Dorsolateral prefrontal cortex (tissue), 120 donors: ENCODE measurements at regions of chr4 and their contacts with region 1.

Region 1: GRCh38 chr4:7802093-7802726 is 137.5 kb downstream of the AFAP1 start:
- DNase-seq: peak; percentile 77 to 94 (median 84)
- H3K4me3 ChIP-seq: no peak overlapping the region
- H3K27ac ChIP-seq: peak overlapping the region in 1 of 59 donors; percentile 3
- H3K27me3 ChIP-seq: no peaks in the 10 kb centered on the region
- CTCF ChIP-seq: peak; percentile 51 to 97 (median 93)

Region 2: GRCh38 chr4:7192252-7193029 is 609.8 kb before region 1 on chr4 and contains the start of gene SORCS2:
- intact Hi-C with region 1: loop called (anchors 2 to 10 kb)
- DNase-seq: peak; percentile 43 to 90 (median 65)
- H3K4me3 ChIP-seq: peak within 1 kb of the TSS; percentile 44 to 82 (median 67)
- H3K27ac ChIP-seq: peak within 1 kb of the TSS in 22 of 59 donors; percentile 3 to 78 (median 33)
- H3K27me3 ChIP-seq: peaks cover 0 to 35% (median 0%) of the 10 kb centered on the region in 45 donors
- CTCF ChIP-seq: peak; percentile 15 to 94 (median 73)
- total RNA-seq, gene SORCS2: 17.6 to 63.7 (median 32.1) TPM

Region 3: GRCh38 chr4:7462509-7462971 is 339.7 kb before region 1 on chr4:
- intact Hi-C with region 1: loop called (anchors 10 kb)
- DNase-seq: peak; percentile 50 to 82 (median 71)
- H3K4me3 ChIP-seq: no peak overlapping the region
- H3K27ac ChIP-seq: peak overlapping the region in 21 of 59 donors; percentile 12 to 82 (median 48)
- H3K27me3 ChIP-seq: no peaks in the 10 kb centered on the region
- CTCF ChIP-seq: peak; percentile 39 to 91 (median 72)

Region 4: GRCh38 chr4:7843831-7844593 is 41.8 kb after region 1 on chr4:
- intact Hi-C with region 1: loop called in 1 of 2 experiments (anchors 2 kb)
- DNase-seq: peak in 9 of 10 donors; percentile 55 to 72 (median 66)
- H3K4me3 ChIP-seq: no peak overlapping the region
- H3K27ac ChIP-seq: peak overlapping the region in 4 of 59 donors; percentile 4 to 19 (median 17)
- H3K27me3 ChIP-seq: no peaks in the 10 kb centered on the region
- CTCF ChIP-seq: peak; percentile 35 to 75 (median 60)

Region 5: GRCh38 chr4:7894677-7895181 is 92.5 kb after region 1 on chr4:
- intact Hi-C with region 1: no loop called
- DNase-seq: peak in 1 of 10 donors; percentile 62
- H3K4me3 ChIP-seq: no peak overlapping the region
- H3K27ac ChIP-seq: peak overlapping the region in 2 of 59 donors; percentile 12 to 78
- H3K27me3 ChIP-seq: no peaks in the 10 kb centered on the region
- CTCF ChIP-seq: no peak

Region 6: GRCh38 chr4:7987148-7987989 is 185.2 kb after region 1 on chr4:
- intact Hi-C with region 1: loop called (anchors 1 to 2 kb)
- DNase-seq: peak in 8 of 10 donors; percentile 61 to 84 (median 78)
- H3K4me3 ChIP-seq: no peak overlapping the region
- H3K27ac ChIP-seq: no peak overlapping the region
- H3K27me3 ChIP-seq: no peaks in the 10 kb centered on the region
- CTCF ChIP-seq: peak; percentile 61 to 94 (median 87)